HCT116 (cell line): ENCODE measurements at regions of chr19 and their contacts with region 1.

Region 1: DNA sequence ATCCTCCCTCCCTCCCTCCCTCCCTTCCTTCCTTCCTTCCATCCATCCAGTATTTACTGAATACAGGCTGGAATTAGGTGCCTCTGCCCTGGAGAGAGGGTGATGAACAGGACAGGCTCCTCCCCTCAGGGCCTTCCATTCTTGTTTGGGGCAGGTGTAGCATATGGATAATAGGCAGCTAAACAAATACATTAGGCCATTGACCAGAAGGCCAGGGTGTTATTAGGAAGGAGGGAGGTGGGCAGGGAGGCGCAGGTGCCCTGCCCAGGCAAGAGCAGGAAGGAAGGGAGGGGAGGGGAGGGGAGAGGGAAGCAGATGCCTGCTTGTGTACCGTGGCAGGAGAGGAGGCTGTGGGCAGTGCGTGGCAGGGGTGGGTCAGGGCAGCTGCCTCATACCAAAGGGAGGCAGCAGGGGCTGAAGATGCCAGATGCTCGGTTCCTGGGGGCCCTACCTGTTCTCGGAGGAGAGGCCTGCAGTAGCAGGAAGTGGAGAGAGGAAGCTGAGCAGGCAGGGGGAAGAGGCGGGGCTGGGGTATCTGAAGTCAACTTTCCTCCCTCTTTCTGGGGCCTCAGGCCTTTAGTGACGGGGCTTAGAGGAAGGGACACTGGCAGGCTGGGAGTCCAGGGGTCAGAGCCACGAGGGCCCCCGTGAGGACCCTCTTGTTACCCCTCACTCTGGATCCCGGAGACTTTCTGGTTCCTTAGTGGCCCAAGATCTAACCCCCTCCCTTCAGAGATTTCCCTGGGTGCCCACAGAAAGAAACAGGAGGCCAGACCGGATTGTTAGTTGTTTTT is at the start of gene RINL:
- DNase-seq: no peak
- ATAC-seq: peak; percentile 77
- H3K4me3 ChIP-seq: peak within 1 kb of the TSS; percentile 53 to 65
- H3K27ac ChIP-seq: peak within 1 kb of the TSS; percentile 77
- H3K4me1 ChIP-seq: peaks cover 12 to 16% of the 10 kb centered on the region in 2 experiments; a peak in 3 of 4 replicates
- H3K27me3 ChIP-seq: no peaks in the 10 kb centered on the region
- CTCF ChIP-seq: no peak
- POLR2A ChIP-seq: no peak
- RAD21 ChIP-seq: no peak
- total RNA-seq, gene RINL: 28.6 TPM

Region 2: DNA sequence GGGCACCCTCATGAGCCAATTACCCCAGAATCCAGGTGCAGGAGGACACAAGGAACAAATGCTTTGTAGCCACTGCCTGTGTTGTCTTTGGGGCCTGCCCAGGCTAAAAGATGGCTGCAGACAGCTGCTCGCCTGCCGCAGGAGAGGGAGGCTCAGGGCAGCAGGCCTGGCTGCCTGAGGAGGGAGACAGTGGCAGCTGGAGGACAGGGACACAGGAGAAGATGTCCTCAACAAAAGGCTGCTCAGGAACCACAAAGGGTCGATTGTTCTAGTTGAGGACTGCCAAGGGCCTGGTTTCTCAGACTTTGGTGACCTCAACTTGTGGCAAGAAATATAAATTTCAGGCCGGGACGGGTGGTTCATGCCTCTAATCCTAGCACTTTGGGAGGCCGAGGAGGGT is 13.8 kb after region 1 on chr19:
- CTCF ChIA-PET with region 1: interaction called, 28 read pairs
- POLR2A ChIA-PET with region 1: no interaction called
- RAD21 ChIA-PET with region 1: no interaction called
- intact Hi-C with region 1: no loop called
- DNase-seq: no peak
- ATAC-seq: no peak
- H3K4me3 ChIP-seq: no peak overlapping the region
- H3K27ac ChIP-seq: no peak overlapping the region
- H3K4me1 ChIP-seq: peaks cover 0 to 5% of the 10 kb centered on the region in 2 experiments; a peak in 2 of 4 replicates
- H3K27me3 ChIP-seq: no peaks in the 10 kb centered on the region
- CTCF ChIP-seq: no peak
- POLR2A ChIP-seq: no peak
- RAD21 ChIP-seq: no peak

Region 3: GRCh38 chr19:38989066-38989605 is 111.2 kb after region 1 on chr19:
- CTCF ChIA-PET with region 1: no interaction called
- POLR2A ChIA-PET with region 1: no interaction called
- RAD21 ChIA-PET with region 1: no interaction called
- intact Hi-C with region 1: no loop called
- DNase-seq: no peak
- ATAC-seq: peak; percentile 32; the same call in 1 of the 2 replicates
- H3K4me3 ChIP-seq: no peak overlapping the region
- H3K27ac ChIP-seq: no peak overlapping the region
- H3K4me1 ChIP-seq: peaks cover 2 to 14% of the 10 kb centered on the region in 2 experiments; a peak in 2 of 4 replicates
- H3K27me3 ChIP-seq: no peaks in the 10 kb centered on the region
- CTCF ChIP-seq: no peak
- POLR2A ChIP-seq: no peak
- RAD21 ChIP-seq: no peak

Region 4: DNA sequence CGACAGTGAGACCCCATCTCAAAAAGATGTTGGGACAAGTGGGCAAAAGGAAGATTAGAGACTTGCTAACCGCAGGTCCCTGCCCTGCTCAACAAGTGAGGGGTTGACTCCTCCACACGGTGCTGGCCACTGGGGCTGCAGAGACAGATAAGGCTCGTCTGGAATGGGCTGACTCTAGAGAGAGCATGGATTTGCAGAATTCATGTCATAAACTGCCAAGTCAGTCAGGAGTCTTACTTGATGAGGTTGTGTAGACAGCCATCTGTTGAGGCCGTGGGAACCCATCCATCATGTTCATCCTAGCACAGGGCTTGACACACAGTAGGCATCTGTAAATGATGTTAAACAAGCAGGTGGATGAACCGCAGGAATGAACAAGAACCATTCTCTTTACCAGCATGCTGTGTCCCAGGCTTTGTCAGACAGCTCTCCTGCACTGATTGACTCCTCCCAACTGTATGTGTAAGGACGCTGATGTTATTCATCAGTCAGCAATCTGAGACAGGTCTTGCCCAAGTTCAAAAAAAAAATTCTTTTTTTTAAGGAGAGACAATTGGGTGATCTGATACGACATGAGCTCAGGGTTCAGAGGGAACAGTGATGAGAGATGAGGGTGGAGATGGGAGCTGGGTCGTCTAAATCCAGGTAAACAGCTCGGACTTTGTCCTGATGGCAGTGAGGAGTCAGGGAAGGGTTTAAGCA is 504.1 kb after region 1 on chr19:
- CTCF ChIA-PET with region 1: no interaction called
- POLR2A ChIA-PET with region 1: no interaction called
- RAD21 ChIA-PET with region 1: no interaction called
- intact Hi-C with region 1: no loop called
- DNase-seq: no peak
- ATAC-seq: no peak
- H3K4me3 ChIP-seq: no peak overlapping the region
- H3K27ac ChIP-seq: no peak overlapping the region
- H3K4me1 ChIP-seq: no peaks in the 10 kb centered on the region
- H3K27me3 ChIP-seq: no peaks in the 10 kb centered on the region
- CTCF ChIP-seq: no peak
- POLR2A ChIP-seq: no peak
- RAD21 ChIP-seq: no peak